ENCODE measurements at regions of chr17 and their contacts with region 1.

Region 1: DNA sequence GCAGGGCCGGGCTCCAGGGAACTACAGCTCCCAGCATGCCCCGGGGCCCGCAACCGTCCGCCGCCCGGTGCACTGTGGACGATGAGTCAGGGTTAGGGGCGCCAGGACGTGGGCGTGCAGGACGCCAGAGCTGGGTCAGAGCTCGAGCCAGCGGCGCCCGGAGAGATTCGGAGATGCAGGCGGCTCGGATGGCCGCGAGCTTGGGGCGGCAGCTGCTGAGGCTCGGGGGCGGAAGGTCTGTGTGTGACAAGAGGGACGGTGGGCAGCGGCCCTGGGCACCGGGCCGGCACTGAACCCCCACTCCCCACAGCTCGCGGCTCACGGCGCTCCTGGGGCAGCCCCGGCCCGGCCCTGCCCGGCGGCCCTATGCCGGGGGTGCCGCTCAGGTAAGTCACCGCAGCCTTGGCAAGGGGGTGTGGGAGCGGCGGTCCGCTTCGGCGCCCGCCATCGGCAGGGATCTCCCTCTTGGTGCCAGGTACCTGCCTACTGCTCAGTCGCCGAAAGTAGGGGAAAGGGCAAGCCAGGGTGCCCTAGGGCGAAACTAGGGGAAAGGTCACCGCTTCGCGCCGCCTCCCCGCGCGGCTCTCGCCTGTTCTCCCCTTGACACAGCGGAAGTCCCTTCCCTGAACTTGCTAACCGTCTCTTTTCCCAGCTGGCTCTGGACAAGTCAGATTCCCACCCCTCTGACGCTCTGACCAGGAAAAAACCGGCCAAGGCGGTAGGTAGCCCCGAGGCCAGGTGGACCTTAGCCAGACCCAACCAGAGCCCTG is at the starts of genes ACADVL and DLG4:
- DNase-seq: peak; percentile 82 to 96
- ATAC-seq: peak; percentile 54 to 82
- H3K4me3 ChIP-seq: peak within 1 kb of the TSS; percentile 74
- H3K27ac ChIP-seq: peak within 1 kb of the TSS; percentile 88 to 98
- H3K4me1 ChIP-seq: peaks cover 51% of the 10 kb centered on the region
- CTCF ChIP-seq: no peak
- EP300 ChIP-seq: no peak
- POLR2A ChIP-seq: peak; percentile 88
- RAD21 ChIP-seq: no peak
- polyA plus RNA-seq, gene ACADVL: 238 and 288 TPM in 2 replicates
- polyA plus RNA-seq, gene DLG4: 8.3 and 9.2 TPM in 2 replicates

Region 2: DNA sequence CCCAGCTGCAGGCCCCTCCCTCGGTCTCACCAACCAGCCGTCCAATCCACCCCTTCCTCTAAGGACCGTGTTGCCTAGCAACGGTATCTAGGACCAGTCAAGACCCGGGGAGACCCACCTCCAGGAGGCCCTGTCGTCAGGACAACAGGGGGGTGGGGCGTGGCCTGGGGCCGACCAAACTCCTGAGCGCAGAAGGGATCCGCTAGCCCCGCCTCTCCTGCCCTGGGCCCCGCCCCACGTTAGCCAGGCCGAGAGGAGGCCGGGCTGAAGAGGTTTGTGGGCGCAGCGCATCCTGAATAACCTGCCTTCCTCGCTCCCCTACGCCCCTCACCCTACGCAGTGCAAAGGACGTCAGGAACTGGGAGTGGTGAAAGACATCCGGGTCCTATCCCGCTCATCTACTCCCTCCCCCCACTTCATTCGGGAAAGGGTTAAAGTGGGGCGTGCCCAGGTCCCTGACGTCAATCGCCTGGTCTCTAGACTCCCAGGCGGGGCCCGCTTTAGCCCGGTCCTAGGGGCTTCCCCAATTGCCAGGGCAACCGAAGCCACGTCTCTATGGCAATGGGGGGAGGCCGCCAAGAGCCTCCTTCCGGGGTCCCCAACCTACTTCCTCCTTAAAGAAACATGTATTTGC is 15.1 kb before region 1 on chr17:
- CTCF ChIA-PET with region 1: interaction called, 12 read pairs
- POLR2A ChIA-PET with region 1: no interaction called
- DNase-seq: peak; percentile 94 to 98
- ATAC-seq: peak; percentile 87 to 91
- H3K4me3 ChIP-seq: peak overlapping the region; percentile 52
- H3K27ac ChIP-seq: peak overlapping the region; percentile 82 to 85
- H3K4me1 ChIP-seq: peaks cover 12% of the 10 kb centered on the region
- CTCF ChIP-seq: no peak
- EP300 ChIP-seq: no peak
- POLR2A ChIP-seq: peak; percentile 59
- RAD21 ChIP-seq: no peak

Region 3: DNA sequence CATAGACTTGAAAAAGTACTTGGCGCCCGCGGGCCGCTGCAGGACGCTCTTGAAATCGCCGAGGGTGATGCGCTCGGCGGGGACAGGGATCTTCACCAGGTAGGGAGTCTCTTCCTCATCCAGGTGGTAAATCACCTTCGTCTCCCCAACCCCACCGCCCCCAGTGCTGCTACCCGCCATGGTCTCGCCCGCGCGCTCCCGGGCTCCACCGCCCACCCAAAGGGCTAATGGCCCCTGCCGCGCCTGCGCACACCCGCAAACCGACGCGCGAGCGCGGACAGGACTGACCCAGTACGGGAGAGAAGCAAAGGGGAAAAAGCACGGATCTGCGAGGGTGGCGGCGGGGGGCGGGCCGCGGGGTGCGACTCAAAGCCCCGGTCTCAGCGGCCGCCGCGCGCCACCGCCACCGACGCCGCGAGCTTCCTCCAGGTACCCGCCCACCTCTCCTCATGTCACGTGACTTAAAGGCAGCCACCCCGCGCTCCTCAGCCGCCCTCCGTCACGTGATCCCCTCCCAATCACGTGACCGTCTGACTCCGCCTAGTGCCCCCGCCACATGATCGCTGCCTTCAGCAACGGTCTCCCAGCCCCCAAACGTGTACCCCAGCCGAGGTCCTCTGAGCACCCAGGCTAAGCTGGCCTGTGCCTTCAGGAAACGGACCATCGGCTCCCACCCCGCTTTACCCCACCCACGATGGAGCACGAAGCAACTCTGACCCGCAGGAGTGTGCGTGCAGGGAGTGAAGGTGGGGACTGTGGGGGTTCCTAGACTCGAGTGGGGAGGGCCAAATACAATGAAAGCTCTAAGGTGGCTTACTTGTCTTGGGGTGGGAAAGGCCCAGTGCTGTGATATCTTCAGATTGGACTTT is 14.3 kb after region 1 on chr17 and contains the start of gene DVL2:
- CTCF ChIA-PET with region 1: interaction called, 169 read pairs
- POLR2A ChIA-PET with region 1: interaction called, 63 read pairs
- DNase-seq: peak; percentile 98
- ATAC-seq: peak; percentile 49 to 75
- H3K4me3 ChIP-seq: peak within 1 kb of the TSS; percentile 77
- H3K27ac ChIP-seq: peak within 1 kb of the TSS; percentile 94 to 95
- H3K4me1 ChIP-seq: peaks cover 44% of the 10 kb centered on the region
- CTCF ChIP-seq: no peak
- EP300 ChIP-seq: 0 out of 5 replicates have a peak, but pooled peaks of 1 of the 2 experiments have one; percentile 24
- POLR2A ChIP-seq: peak; percentile 86
- RAD21 ChIP-seq: 0 out of 5 replicates have a peak, but pooled peaks of 1 of the 2 experiments have one; percentile 13
- polyA plus RNA-seq, gene DVL2: 5.7 and 9.6 TPM in 2 replicates

Region 4: GRCh38 chr17:7239091-7240027 is 19.4 kb after region 1 on chr17 and contains the start of gene PHF23:
- CTCF ChIA-PET with region 1: interaction called, 169 read pairs
- POLR2A ChIA-PET with region 1: interaction called, 63 read pairs
- DNase-seq: peak; percentile 100
- ATAC-seq: peak; percentile 54 to 79
- H3K4me3 ChIP-seq: peak within 1 kb of the TSS; percentile 99
- H3K27ac ChIP-seq: peak within 1 kb of the TSS; percentile 98 to 100
- H3K4me1 ChIP-seq: peaks cover 52% of the 10 kb centered on the region
- CTCF ChIP-seq: no peak
- EP300 ChIP-seq: no peak
- POLR2A ChIP-seq: peak; percentile 70
- RAD21 ChIP-seq: no peak
- polyA plus RNA-seq, gene PHF23: 52.1 and 61.2 TPM in 2 replicates